CD4-positive, alpha-beta T cell (primary cell): ENCODE measurements at regions of chr12 and their contacts with region 1.

Region 1: GRCh38 chr12:106753526-106753925 is 21.0 kb upstream of the RIC8B start:
- DNase-seq: peak in 13 of 14 experiments; percentile 9 to 78 (median 49)
- ATAC-seq: peak; percentile 94
- H3K4me3 ChIP-seq: no peak overlapping the region
- H3K4me3 Mint-ChIP-seq: peak overlapping the region; percentile 1
- H3K27ac ChIP-seq: no peak overlapping the region
- H3K27ac Mint-ChIP-seq: peak overlapping the region; percentile 47
- H3K4me1 ChIP-seq: peaks cover 43% of the 10 kb centered on the region
- H3K4me1 Mint-ChIP-seq: peaks cover 35% of the 10 kb centered on the region
- H3K27me3 ChIP-seq: no peaks in the 10 kb centered on the region
- H3K27me3 Mint-ChIP-seq: no peaks in the 10 kb centered on the region
- CTCF ChIP-seq: no peak

Region 2: DNA sequence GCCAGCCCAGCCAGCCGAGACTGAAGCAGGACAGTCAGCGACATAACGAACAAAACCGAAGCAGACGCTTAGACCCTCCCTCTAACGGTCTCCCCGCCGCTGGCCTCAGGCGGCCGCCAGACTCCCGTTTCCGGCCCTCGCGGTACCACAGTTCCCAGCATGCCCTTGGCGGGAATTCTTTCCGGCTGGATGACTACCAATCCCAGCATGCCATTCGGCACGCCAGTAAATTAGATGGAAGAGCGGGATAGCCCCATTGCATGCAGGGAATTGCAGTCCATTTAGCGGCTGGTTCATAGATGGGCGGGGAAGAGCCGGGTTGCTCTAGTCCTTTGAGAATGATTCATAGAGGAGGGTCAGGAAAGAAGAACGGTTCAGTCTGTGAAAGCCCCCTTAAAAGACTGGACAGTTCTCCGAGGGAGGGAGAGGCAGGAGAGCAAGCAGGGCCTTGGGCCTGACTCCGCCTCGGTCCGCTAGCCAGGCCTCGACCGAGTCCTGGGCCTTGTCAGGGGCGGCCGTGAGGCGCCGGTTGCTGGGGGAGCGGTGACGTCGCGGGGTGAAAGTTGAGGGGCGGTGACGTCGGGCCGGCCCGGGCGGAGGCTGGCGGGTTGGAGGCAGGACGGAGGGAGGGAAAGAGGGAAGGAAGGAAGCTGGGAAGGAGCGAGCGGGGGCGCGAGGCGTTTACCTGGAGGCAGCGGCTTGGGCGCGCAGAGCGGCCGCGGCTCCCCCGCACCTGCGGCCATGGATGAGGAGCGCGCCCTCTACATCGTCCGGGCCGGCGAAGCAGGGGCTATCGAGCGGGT is 20.7 kb after region 1 on chr12 and contains the start of gene RIC8B:
- CTCF ChIA-PET with region 1: no interaction called
- POLR2A ChIA-PET with region 1: interaction called, 4 read pairs
- intact Hi-C with region 1: loop called in 1 of 2 experiments (anchors 2 kb)
- DNase-seq: peak; percentile 51 to 91 (median 72)
- ATAC-seq: peak; percentile 82
- H3K4me3 ChIP-seq: peak within 1 kb of the TSS; percentile 89
- H3K4me3 Mint-ChIP-seq: peak within 1 kb of the TSS; percentile 98
- H3K27ac ChIP-seq: peak within 1 kb of the TSS; percentile 80 to 90
- H3K27ac Mint-ChIP-seq: peak within 1 kb of the TSS; percentile 97
- H3K4me1 ChIP-seq: peaks cover 31% of the 10 kb centered on the region
- H3K4me1 Mint-ChIP-seq: peaks cover 42% of the 10 kb centered on the region
- H3K27me3 ChIP-seq: no peaks in the 10 kb centered on the region
- H3K27me3 Mint-ChIP-seq: no peaks in the 10 kb centered on the region
- CTCF ChIP-seq: no peak
- total RNA-seq, gene RIC8B: 5.5 to 9.0 TPM

Region 3: GRCh38 chr12:107843351-107844311 is 1090.1 kb after region 1 on chr12:
- CTCF ChIA-PET with region 1: no interaction called
- POLR2A ChIA-PET with region 1: no interaction called
- intact Hi-C with region 1: no loop called
- DNase-seq: no peak
- ATAC-seq: no peak
- H3K4me3 ChIP-seq: no peak overlapping the region
- H3K4me3 Mint-ChIP-seq: no peak overlapping the region
- H3K27ac ChIP-seq: no peak overlapping the region
- H3K27ac Mint-ChIP-seq: no peak overlapping the region
- H3K4me1 ChIP-seq: peaks cover 3% of the 10 kb centered on the region
- H3K4me1 Mint-ChIP-seq: no peaks in the 10 kb centered on the region
- H3K27me3 ChIP-seq: peaks cover 38 to 65% of the 10 kb centered on the region in 2 experiments
- H3K27me3 Mint-ChIP-seq: peaks cover 68% of the 10 kb centered on the region
- CTCF ChIP-seq: no peak